ENCODE measurements at regions of chr3 and their contacts with region 1.

Region 1: DNA sequence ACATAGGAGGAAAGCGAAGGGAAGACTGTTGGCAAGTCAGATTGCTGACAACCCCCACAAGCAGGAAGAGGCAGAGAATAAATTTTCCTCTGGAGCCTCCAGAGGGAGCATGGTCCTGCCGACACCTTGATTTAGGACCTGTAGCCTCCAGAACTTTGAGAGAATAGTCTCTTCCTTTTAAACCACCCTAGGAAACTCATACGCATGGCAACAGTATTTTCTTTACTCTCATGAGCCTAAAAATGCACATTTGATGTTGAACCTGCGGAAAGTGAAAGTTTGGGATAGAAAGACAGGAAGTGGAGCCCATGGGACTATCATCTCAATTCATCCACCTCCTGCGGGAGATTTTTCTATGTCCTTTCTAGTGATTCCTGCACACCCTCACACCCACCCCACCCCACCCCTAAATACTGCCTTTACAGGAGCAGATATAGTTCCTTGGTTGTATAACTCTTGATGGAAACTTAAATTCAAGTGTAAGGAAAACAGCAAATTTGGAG is 116.7 kb upstream of the LPP start:
- DNase-seq: peak; percentile 82 to 88
- H3K4me3 ChIP-seq: no peak overlapping the region
- H3K4me3 Mint-ChIP-seq: peak overlapping the region; percentile 40
- H3K27ac Mint-ChIP-seq: peak overlapping the region; percentile 53
- H3K4me1 ChIP-seq: peaks cover 34% of the 10 kb centered on the region
- H3K4me1 Mint-ChIP-seq: peaks cover 31% of the 10 kb centered on the region
- H3K27me3 ChIP-seq: no peaks in the 10 kb centered on the region
- H3K27me3 Mint-ChIP-seq: no peaks in the 10 kb centered on the region
- CTCF ChIP-seq: peak; percentile 51 to 77

Region 2: GRCh38 chr3:187490366-187490765 is 546.9 kb before region 1 on chr3:
- CTCF ChIA-PET with region 1: no interaction called
- POLR2A ChIA-PET with region 1: no interaction called
- intact Hi-C with region 1: no loop called
- DNase-seq: no peak
- H3K4me3 ChIP-seq: no peak overlapping the region
- H3K4me3 Mint-ChIP-seq: no peak overlapping the region
- H3K27ac Mint-ChIP-seq: no peak overlapping the region
- H3K4me1 ChIP-seq: no peaks in the 10 kb centered on the region
- H3K4me1 Mint-ChIP-seq: no peaks in the 10 kb centered on the region
- H3K27me3 ChIP-seq: no peaks in the 10 kb centered on the region
- H3K27me3 Mint-ChIP-seq: no peaks in the 10 kb centered on the region
- CTCF ChIP-seq: no peak

Region 3: DNA sequence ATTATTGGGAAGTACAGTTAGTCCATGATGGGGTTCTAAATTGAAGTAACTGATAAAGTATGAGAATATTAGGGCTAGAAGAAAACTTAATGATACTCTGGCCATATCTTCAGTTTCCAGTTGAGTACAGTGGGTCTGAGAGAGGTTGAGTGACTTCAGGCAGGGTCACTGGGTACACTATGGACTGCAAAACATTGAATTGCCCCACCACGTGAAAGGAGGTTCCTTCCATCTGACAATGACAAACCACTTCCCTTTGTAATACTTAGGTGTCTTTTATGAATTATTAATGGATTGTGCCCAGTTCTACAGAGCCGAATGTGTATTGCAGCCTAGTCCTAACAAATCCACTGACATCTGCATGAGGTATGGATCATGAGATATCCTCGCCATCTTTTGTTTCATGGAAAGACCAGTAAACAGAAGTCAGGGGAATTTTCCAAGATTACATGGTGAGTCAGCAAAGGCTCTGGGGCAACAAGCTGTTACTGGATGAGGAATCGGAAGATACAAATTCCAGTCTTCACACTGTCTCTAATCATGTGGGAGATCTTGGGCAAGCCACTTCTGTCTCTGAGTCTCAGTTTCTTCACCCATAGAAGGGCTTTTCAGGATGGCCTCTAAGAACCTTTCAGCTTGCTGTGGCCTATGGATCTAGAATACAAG is 225.5 kb before region 1 on chr3:
- CTCF ChIA-PET with region 1: interaction called, 3 read pairs
- POLR2A ChIA-PET with region 1: no interaction called
- intact Hi-C with region 1: loop called (anchors 1 kb)
- DNase-seq: no peak
- H3K4me3 ChIP-seq: no peak overlapping the region
- H3K4me3 Mint-ChIP-seq: no peak overlapping the region
- H3K27ac Mint-ChIP-seq: peak overlapping the region; percentile 81
- H3K4me1 ChIP-seq: peaks cover 52% of the 10 kb centered on the region
- H3K4me1 Mint-ChIP-seq: peaks cover 30% of the 10 kb centered on the region
- H3K27me3 ChIP-seq: no peaks in the 10 kb centered on the region
- H3K27me3 Mint-ChIP-seq: no peaks in the 10 kb centered on the region
- CTCF ChIP-seq: no peak

Region 4: DNA sequence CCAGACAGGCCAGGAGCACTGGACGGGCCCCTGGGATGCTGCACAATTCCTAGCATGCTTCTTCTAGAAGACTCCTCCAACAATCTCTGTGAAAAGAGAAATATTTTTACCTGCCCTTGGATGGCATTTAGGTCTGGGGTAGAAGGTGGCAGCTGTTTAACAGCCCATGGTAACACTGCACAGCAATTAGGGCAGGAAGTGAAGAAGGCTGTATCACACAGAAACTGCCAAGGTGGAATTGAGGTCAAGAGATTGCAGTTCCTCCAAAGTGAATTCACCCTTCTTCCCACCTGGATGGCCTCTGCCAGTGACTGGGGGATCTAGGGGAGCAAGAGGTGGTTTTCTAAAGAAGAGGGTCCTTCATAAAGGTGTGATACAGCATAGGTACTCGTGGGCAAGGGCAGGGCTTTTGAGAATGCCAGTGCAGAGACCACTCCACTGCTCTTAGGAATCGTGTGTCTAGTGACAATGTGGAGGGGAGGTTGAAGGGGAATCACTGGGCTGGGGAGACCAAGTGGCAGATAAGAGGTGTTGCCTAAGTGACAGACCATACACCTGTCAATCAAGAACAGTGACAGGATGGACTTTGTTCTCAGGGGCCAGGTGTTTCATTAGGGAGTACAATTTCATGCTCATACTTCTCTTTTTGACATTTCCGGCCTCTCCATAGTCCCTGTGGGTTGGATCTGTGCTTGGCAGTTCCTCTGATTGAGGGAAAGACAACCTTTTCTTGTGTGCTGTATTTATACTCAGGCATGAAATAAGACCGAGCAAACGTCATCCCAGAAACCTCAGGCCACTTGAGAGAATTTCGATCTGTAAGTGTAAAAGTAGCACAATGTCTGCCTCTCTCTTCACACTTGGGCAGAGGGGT is 208.5 kb before region 1 on chr3:
- CTCF ChIA-PET with region 1: no interaction called
- POLR2A ChIA-PET with region 1: no interaction called
- intact Hi-C with region 1: no loop called
- DNase-seq: peak; percentile 41 to 63
- H3K4me3 ChIP-seq: no peak overlapping the region
- H3K4me3 Mint-ChIP-seq: peak overlapping the region; percentile 34
- H3K27ac Mint-ChIP-seq: peak overlapping the region; percentile 42
- H3K4me1 ChIP-seq: peaks cover 22% of the 10 kb centered on the region
- H3K4me1 Mint-ChIP-seq: peaks cover 18% of the 10 kb centered on the region
- H3K27me3 ChIP-seq: no peaks in the 10 kb centered on the region
- H3K27me3 Mint-ChIP-seq: no peaks in the 10 kb centered on the region
- CTCF ChIP-seq: no peak

Region 5: DNA sequence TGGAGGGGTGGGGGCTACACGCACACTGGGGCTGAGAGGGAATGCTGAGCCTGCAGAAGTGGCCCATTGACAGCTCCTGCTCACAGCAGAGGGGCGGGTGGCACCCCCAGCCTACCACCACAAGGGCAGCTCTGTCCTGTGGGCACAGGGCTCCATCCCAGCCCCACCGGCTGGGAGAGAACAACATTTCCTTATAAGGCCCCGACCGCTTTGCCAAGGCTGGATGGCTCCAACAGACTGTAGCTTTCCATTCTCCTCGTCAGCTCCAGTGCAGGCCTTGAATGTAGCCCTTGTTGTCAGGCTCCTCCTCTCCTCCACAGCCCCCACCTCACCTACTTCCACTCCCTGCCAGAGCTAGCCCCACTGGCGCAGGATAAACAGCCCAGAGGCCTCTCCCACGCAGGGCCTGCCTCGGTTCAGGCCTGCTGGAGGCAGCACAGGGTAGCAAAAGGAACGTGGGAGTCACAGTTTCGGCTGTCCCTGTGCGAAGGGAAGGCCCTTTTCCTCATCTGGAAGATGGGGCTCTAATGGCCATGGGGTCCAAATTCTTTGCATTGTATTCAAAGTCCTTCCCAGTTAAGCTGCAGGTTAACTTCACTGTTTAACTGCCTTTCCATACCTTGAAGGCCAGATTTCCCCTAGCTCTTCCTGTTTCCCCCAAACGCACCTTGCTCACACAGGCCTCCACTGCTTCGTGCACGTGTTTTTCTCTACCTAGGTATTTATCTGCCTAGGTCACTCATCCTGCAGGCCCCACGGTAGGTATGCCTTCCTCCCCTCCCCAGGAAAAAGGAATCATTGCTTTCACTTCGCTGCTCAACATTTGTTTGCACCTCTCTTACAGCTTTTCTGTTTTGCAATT is 15.1 kb after region 1 on chr3:
- CTCF ChIA-PET with region 1: interaction called, 5 read pairs
- POLR2A ChIA-PET with region 1: no interaction called
- intact Hi-C with region 1: loop called (anchors 1 kb)
- DNase-seq: peak; percentile 76
- H3K4me3 ChIP-seq: no peak overlapping the region
- H3K4me3 Mint-ChIP-seq: peak overlapping the region; percentile 48
- H3K27ac Mint-ChIP-seq: peak overlapping the region; percentile 69
- H3K4me1 ChIP-seq: peaks cover 61% of the 10 kb centered on the region
- H3K4me1 Mint-ChIP-seq: peaks cover 25% of the 10 kb centered on the region
- H3K27me3 ChIP-seq: no peaks in the 10 kb centered on the region
- H3K27me3 Mint-ChIP-seq: no peaks in the 10 kb centered on the region
- CTCF ChIP-seq: peak in 1 of 2 experiments; percentile 20

Region 6: GRCh38 chr3:188076176-188076575 is 38.9 kb after region 1 on chr3:
- CTCF ChIA-PET with region 1: no interaction called
- POLR2A ChIA-PET with region 1: no interaction called
- intact Hi-C with region 1: no loop called
- DNase-seq: no peak
- H3K4me3 ChIP-seq: no peak overlapping the region
- H3K4me3 Mint-ChIP-seq: no peak overlapping the region
- H3K27ac Mint-ChIP-seq: no peak overlapping the region
- H3K4me1 ChIP-seq: peaks cover 10% of the 10 kb centered on the region; the same call in 1 of the 2 replicates
- H3K4me1 Mint-ChIP-seq: peaks cover 6% of the 10 kb centered on the region
- H3K27me3 ChIP-seq: no peaks in the 10 kb centered on the region
- H3K27me3 Mint-ChIP-seq: no peaks in the 10 kb centered on the region
- CTCF ChIP-seq: no peak

Region 7: DNA sequence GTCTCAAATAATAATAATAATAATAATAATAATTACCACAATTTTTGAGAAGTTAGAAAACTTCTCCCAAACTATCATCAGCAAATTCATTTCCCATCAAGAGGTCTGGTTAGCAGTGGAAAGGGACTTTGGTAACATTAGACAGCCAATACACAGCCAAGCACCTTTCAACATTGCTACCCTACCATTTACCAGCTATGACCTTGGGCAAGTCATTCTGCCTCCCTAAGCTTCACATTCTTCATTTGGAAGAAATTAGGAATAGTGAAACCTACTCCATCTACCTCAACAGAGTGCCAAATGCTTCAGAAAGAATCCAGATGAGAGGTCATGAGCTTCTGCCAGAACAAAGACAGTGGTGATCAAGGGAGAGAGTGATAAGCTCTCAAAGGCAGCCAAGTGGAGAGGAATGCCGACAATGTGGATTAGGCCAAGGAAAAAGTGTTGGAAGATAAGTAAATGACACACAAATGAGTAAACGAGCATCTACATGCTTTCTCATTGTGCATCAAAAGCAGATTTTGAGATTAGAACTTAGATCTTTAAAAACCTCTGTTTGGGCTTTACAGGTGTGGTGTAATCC is 73.8 kb after region 1 on chr3:
- CTCF ChIA-PET with region 1: no interaction called
- POLR2A ChIA-PET with region 1: no interaction called
- intact Hi-C with region 1: loop called (anchors 1 kb)
- DNase-seq: peak; percentile 44 to 70
- H3K4me3 ChIP-seq: no peak overlapping the region
- H3K4me3 Mint-ChIP-seq: no peak overlapping the region
- H3K27ac Mint-ChIP-seq: peak overlapping the region; percentile 29
- H3K4me1 ChIP-seq: peaks cover 22% of the 10 kb centered on the region
- H3K4me1 Mint-ChIP-seq: peaks cover 27% of the 10 kb centered on the region
- H3K27me3 ChIP-seq: no peaks in the 10 kb centered on the region
- H3K27me3 Mint-ChIP-seq: no peaks in the 10 kb centered on the region
- CTCF ChIP-seq: no peak

Region 8: DNA sequence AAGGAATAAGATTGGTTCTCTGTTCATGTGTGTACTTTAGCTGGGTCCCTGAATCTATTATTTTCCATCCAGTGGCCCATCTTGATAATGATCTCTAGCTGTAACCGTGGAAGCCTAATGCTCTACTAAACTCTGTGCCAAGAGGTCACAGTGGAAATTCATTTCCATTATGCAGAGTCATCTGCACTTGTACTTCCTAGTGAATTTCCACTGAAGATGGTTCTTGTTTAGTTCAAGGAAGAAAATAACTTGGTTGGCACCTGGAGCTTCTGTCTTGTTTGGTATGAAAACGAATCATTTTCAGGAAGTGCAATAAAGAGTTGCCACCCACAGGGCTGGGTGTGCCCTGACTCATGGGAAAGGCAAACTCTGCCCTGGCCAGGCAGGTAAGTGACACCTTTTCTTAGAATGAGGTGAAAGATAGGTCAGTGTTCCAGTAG is 127.0 kb after region 1 on chr3:
- CTCF ChIA-PET with region 1: no interaction called
- POLR2A ChIA-PET with region 1: no interaction called
- intact Hi-C with region 1: no loop called
- DNase-seq: no peak
- H3K4me3 ChIP-seq: no peak overlapping the region
- H3K4me3 Mint-ChIP-seq: no peak overlapping the region
- H3K27ac Mint-ChIP-seq: peak overlapping the region; percentile 48
- H3K4me1 ChIP-seq: peaks cover 38% of the 10 kb centered on the region
- H3K4me1 Mint-ChIP-seq: peaks cover 23% of the 10 kb centered on the region
- H3K27me3 ChIP-seq: no peaks in the 10 kb centered on the region
- H3K27me3 Mint-ChIP-seq: no peaks in the 10 kb centered on the region
- CTCF ChIP-seq: no peak

Region 9: GRCh38 chr3:188205992-188206416 is 168.7 kb after region 1 on chr3:
- CTCF ChIA-PET with region 1: no interaction called
- POLR2A ChIA-PET with region 1: no interaction called
- intact Hi-C with region 1: loop called (anchors 2 kb)
- DNase-seq: peak; percentile 53 to 64
- H3K4me3 ChIP-seq: no peak overlapping the region
- H3K4me3 Mint-ChIP-seq: no peak overlapping the region
- H3K27ac Mint-ChIP-seq: no peak overlapping the region
- H3K4me1 ChIP-seq: peaks cover 14% of the 10 kb centered on the region
- H3K4me1 Mint-ChIP-seq: peaks cover 14% of the 10 kb centered on the region
- H3K27me3 ChIP-seq: no peaks in the 10 kb centered on the region
- H3K27me3 Mint-ChIP-seq: no peaks in the 10 kb centered on the region
- CTCF ChIP-seq: peak; percentile 50

Region 10: DNA sequence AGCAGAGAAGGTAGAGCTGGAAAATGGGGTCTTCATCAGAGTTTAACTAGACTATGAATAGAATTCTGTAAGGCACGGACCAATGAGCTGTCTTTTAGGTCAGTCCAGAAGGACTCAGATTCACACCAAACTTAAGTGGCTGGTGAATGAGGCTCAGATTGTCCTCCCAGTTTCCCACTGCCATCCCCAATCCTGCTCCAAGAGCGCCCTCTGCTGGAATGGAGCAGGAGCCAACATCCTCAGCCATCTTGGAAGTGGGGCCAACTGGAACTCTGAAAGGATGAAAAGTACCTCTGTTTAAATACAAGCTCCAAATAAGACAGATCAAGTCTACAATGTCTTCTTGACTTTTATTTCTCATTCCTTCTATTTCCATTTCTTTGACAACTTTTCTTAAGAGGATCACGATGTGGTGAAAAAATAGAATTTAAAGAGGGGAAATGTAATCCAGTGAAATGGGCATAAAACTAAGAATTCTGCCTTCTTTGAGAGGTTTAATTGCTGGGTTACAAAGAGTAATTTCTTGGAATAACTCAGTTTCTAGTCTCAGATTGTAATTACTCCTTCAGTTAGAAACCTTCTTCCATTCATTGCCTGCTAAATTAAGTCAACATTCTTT is 917.4 kb after region 1 on chr3:
- CTCF ChIA-PET with region 1: interaction called, 3 read pairs
- POLR2A ChIA-PET with region 1: no interaction called
- intact Hi-C with region 1: loop called (anchors 2 kb)
- DNase-seq: peak; percentile 77 to 88
- H3K4me3 ChIP-seq: no peak overlapping the region
- H3K4me3 Mint-ChIP-seq: no peak overlapping the region
- H3K27ac Mint-ChIP-seq: no peak overlapping the region
- H3K4me1 ChIP-seq: peaks cover 20% of the 10 kb centered on the region
- H3K4me1 Mint-ChIP-seq: peaks cover 12% of the 10 kb centered on the region
- H3K27me3 ChIP-seq: no peaks in the 10 kb centered on the region
- H3K27me3 Mint-ChIP-seq: no peaks in the 10 kb centered on the region
- CTCF ChIP-seq: peak; percentile 91

Measured in Caco-2 (cell line).